ENCODE measurements at regions of chr1 and their contacts with region 1.

Region 1: GRCh38 chr1:46527474-46528296 is 23.8 kb downstream of the KNCN start:
- DNase-seq: peak; percentile 79
- ATAC-seq: peak; percentile 84
- H3K4me3 ChIP-seq: no peak overlapping the region
- H3K27ac ChIP-seq: no peak overlapping the region
- H3K4me1 ChIP-seq: peaks cover 15% of the 10 kb centered on the region
- H3K27me3 ChIP-seq: no peaks in the 10 kb centered on the region
- CTCF ChIP-seq: peak; percentile 95

Region 2: DNA sequence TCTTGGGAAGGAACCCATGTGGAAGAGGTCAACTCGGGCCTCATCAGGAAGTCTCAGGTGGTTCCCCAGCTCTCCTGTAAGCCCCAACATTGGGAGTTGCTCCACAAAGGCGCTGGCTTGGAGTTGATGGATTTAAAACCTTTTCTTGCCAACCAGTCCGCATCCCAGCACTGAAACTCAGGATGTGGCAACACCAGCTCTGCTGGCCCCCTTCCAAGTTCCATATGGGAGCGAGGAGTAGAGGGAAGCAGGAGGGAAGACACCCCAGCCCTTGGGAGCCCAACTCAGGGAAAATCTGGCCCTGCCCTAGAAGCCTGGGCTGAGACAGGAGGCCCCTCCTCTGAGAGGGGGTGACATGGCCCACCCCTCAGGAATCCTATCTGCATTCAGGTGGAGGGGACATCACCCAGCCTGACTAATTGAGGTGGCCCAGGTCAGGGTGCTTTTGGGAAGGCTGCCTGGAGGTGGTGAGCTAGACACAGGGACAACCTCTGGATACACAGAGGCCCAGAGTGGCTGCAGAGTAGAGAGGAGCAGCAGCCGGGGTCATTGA is 71.2 kb before region 1 on chr1:
- CTCF ChIA-PET with region 1: no interaction called
- POLR2A ChIA-PET with region 1: no interaction called
- intact Hi-C with region 1: no loop called
- DNase-seq: no peak
- ATAC-seq: no peak
- H3K4me3 ChIP-seq: no peak overlapping the region
- H3K27ac ChIP-seq: no peak overlapping the region
- H3K4me1 ChIP-seq: 0 out of 2 replicates have a peak, but pooled peaks cover 2% of the 10 kb centered on the region
- H3K27me3 ChIP-seq: no peaks in the 10 kb centered on the region
- CTCF ChIP-seq: no peak

Region 3: GRCh38 chr1:46477153-46477929 is 50.3 kb before region 1 on chr1:
- CTCF ChIA-PET with region 1: interaction called, 4 read pairs
- POLR2A ChIA-PET with region 1: no interaction called
- intact Hi-C with region 1: loop called (anchors 1 kb)
- DNase-seq: peak; percentile 76
- ATAC-seq: peak; percentile 84
- H3K4me3 ChIP-seq: no peak overlapping the region
- H3K27ac ChIP-seq: no peak overlapping the region
- H3K4me1 ChIP-seq: peaks cover 6% of the 10 kb centered on the region; the same call in 1 of the 2 replicates
- H3K27me3 ChIP-seq: no peaks in the 10 kb centered on the region
- CTCF ChIP-seq: peak; percentile 95